ENCODE measurements at regions of chr17 and their contacts with region 1.

Region 1: GRCh38 chr17:4548721-4549531 is 6.3 kb downstream of the MYBBP1A start:
- DNase-seq: peak; percentile 18
- ATAC-seq: no peak
- H3K4me3 ChIP-seq: no peak overlapping the region
- H3K27ac ChIP-seq: no peak overlapping the region
- H3K4me1 ChIP-seq: peaks cover 2% of the 10 kb centered on the region; the same call in 1 of the 2 replicates
- H3K27me3 ChIP-seq: no peaks in the 10 kb centered on the region
- CTCF ChIP-seq: no peak
- POLR2A ChIP-seq: no peak
- RAD21 ChIP-seq: no peak

Region 2: DNA sequence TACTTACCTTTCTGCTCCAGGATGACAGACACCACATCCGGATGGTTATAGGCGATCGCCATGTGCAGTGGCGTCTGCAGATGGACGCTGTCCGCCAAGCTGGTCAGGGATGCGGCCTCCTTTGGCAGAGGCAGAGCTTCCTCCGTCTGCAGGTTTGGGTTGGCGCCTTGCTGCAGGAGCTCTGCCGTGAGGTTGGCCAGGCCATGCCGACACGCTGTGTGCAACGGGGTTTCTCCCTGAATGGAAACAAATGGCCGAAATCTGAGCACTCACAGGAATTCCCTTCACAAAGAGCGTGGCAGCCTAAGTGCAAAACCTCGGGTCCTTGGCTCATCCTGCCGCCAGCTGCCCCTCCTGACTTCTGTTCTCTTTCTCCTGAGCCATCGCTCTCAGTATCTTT is 364.1 kb before region 1 on chr17:
- CTCF ChIA-PET with region 1: no interaction called
- POLR2A ChIA-PET with region 1: interaction called, 18 read pairs
- dilution Hi-C with region 1: no loop called
- in situ Hi-C with region 1: no loop called
- intact Hi-C with region 1: no loop called
- DNase-seq: no peak
- ATAC-seq: no peak
- H3K4me3 ChIP-seq: no peak overlapping the region
- H3K27ac ChIP-seq: no peak overlapping the region
- H3K4me1 ChIP-seq: no peaks in the 10 kb centered on the region
- H3K27me3 ChIP-seq: no peaks in the 10 kb centered on the region
- CTCF ChIP-seq: no peak
- POLR2A ChIP-seq: no peak
- RAD21 ChIP-seq: no peak

Region 3: GRCh38 chr17:4573669-4574068 is 24.7 kb after region 1 on chr17:
- CTCF ChIA-PET with region 1: interaction called, 12 read pairs
- POLR2A ChIA-PET with region 1: no interaction called
- dilution Hi-C with region 1: no loop called
- in situ Hi-C with region 1: no loop called
- intact Hi-C with region 1: no loop called
- DNase-seq: no peak
- ATAC-seq: no peak
- H3K4me3 ChIP-seq: no peak overlapping the region
- H3K27ac ChIP-seq: no peak overlapping the region
- H3K4me1 ChIP-seq: peaks cover 1% of the 10 kb centered on the region; the same call in 1 of the 2 replicates
- H3K27me3 ChIP-seq: peaks cover 42% of the 10 kb centered on the region
- CTCF ChIP-seq: no peak
- POLR2A ChIP-seq: no peak
- RAD21 ChIP-seq: no peak

Region 4: GRCh38 chr17:4580291-4580690 is 31.4 kb after region 1 on chr17:
- CTCF ChIA-PET with region 1: no interaction called
- POLR2A ChIA-PET with region 1: interaction called, 13 read pairs
- dilution Hi-C with region 1: no loop called
- in situ Hi-C with region 1: no loop called
- intact Hi-C with region 1: no loop called
- DNase-seq: no peak
- ATAC-seq: no peak
- H3K4me3 ChIP-seq: no peak overlapping the region
- H3K27ac ChIP-seq: no peak overlapping the region
- H3K4me1 ChIP-seq: peaks cover 1% of the 10 kb centered on the region; the same call in 1 of the 2 replicates
- H3K27me3 ChIP-seq: peaks cover 60% of the 10 kb centered on the region
- CTCF ChIP-seq: no peak
- POLR2A ChIP-seq: no peak
- RAD21 ChIP-seq: no peak

Measured in IMR-90 (cell line).